ENCODE measurements at regions of chr5 and their contacts with region 1.

Region 1: GRCh38 chr5:38382898-38383297 is 124.5 kb downstream of the EGFLAM start:
- DNase-seq: peak; percentile 67
- H3K4me3 ChIP-seq: no peak overlapping the region; a peak in 1 of 4 replicates
- H3K27ac ChIP-seq: no peak overlapping the region
- H3K4me1 ChIP-seq: peaks cover 0 to 4% of the 10 kb centered on the region in 2 experiments; a peak in 2 of 4 replicates
- H3K27me3 ChIP-seq: peaks cover 10% of the 10 kb centered on the region; the same call in 1 of the 2 replicates
- CTCF ChIP-seq: peak; percentile 81
- EP300 ChIP-seq: no peak
- RAD21 ChIP-seq: peak; percentile 74

Region 2: DNA sequence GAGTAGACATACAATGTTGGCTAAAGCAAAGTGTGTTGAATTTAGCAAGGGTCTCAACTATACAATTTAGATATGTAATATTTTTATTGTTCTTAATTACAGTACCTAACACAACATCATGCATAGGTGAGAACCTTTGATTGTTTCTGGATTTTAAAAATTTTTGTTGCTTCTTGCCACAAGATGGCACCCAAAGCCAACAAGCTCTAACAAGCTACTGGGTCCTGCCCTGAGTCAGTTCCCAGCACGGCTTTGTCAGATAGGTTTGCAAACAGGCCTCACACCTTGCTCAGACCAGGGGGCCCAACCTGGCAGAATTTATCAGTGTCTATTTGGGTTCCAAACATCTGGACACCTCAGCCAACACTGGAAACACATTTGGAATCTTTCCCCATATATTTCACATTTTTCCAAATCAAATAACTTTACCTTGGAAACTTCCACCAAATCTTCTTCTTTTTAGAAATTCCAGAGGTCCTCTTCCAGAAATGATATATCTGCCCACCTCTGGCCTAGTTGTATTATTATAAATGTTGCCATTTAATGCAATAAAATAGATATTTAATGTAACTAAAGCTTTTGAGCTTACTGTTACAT is 174.0 kb before region 1 on chr5:
- CTCF ChIA-PET with region 1: interaction called, 27 read pairs
- POLR2A ChIA-PET with region 1: no interaction called
- DNase-seq: peak; percentile 51
- H3K4me3 ChIP-seq: no peak overlapping the region
- H3K27ac ChIP-seq: no peak overlapping the region
- H3K4me1 ChIP-seq: peaks cover 0 to 6% of the 10 kb centered on the region in 2 experiments; a peak in 2 of 4 replicates
- H3K27me3 ChIP-seq: no peaks in the 10 kb centered on the region
- CTCF ChIP-seq: peak; percentile 58
- EP300 ChIP-seq: no peak
- RAD21 ChIP-seq: peak; percentile 84

Region 3: GRCh38 chr5:38258319-38259061 is 124.4 kb before region 1 on chr5 and contains the start of gene EGFLAM:
- CTCF ChIA-PET with region 1: interaction called, 10 read pairs
- POLR2A ChIA-PET with region 1: no interaction called
- DNase-seq: peak; percentile 83
- H3K4me3 ChIP-seq: peak within 1 kb of the TSS; percentile 55 to 61
- H3K27ac ChIP-seq: no peak within 1 kb of the TSS
- H3K4me1 ChIP-seq: peaks cover 0 to 7% of the 10 kb centered on the region in 2 experiments; a peak in 1 of 4 replicates
- H3K27me3 ChIP-seq: peaks cover 48% of the 10 kb centered on the region
- CTCF ChIP-seq: peak; percentile 33; the same call in 1 of the 2 replicates
- EP300 ChIP-seq: no peak
- RAD21 ChIP-seq: no peak
- polyA plus RNA-seq, gene EGFLAM: 0.05 and 0.13 TPM in 2 replicates

Region 4: GRCh38 chr5:38347896-38348295 is 35.0 kb before region 1 on chr5:
- CTCF ChIA-PET with region 1: no interaction called
- POLR2A ChIA-PET with region 1: no interaction called
- DNase-seq: no peak
- H3K4me3 ChIP-seq: no peak overlapping the region
- H3K27ac ChIP-seq: no peak overlapping the region
- H3K4me1 ChIP-seq: no peaks in the 10 kb centered on the region
- H3K27me3 ChIP-seq: no peaks in the 10 kb centered on the region
- CTCF ChIP-seq: no peak
- EP300 ChIP-seq: no peak
- RAD21 ChIP-seq: no peak

Region 5: GRCh38 chr5:38370358-38371100 is 12.4 kb before region 1 on chr5:
- CTCF ChIA-PET with region 1: interaction called, 14 read pairs
- POLR2A ChIA-PET with region 1: no interaction called
- DNase-seq: no peak
- H3K4me3 ChIP-seq: no peak overlapping the region
- H3K27ac ChIP-seq: no peak overlapping the region
- H3K4me1 ChIP-seq: peaks cover 0 to 5% of the 10 kb centered on the region in 2 experiments; a peak in 1 of 4 replicates
- H3K27me3 ChIP-seq: peaks cover 8% of the 10 kb centered on the region; the same call in 1 of the 2 replicates
- CTCF ChIP-seq: no peak
- EP300 ChIP-seq: no peak
- RAD21 ChIP-seq: no peak

Region 6: GRCh38 chr5:38396766-38397165 is 13.9 kb after region 1 on chr5:
- CTCF ChIA-PET with region 1: interaction called, 24 read pairs
- POLR2A ChIA-PET with region 1: no interaction called
- DNase-seq: no peak
- H3K4me3 ChIP-seq: no peak overlapping the region
- H3K27ac ChIP-seq: no peak overlapping the region
- H3K4me1 ChIP-seq: no peaks in the 10 kb centered on the region; a peak in 1 of 4 replicates
- H3K27me3 ChIP-seq: no peaks in the 10 kb centered on the region; the same call in 1 of the 2 replicates
- CTCF ChIP-seq: no peak
- EP300 ChIP-seq: no peak
- RAD21 ChIP-seq: no peak

Region 7: DNA sequence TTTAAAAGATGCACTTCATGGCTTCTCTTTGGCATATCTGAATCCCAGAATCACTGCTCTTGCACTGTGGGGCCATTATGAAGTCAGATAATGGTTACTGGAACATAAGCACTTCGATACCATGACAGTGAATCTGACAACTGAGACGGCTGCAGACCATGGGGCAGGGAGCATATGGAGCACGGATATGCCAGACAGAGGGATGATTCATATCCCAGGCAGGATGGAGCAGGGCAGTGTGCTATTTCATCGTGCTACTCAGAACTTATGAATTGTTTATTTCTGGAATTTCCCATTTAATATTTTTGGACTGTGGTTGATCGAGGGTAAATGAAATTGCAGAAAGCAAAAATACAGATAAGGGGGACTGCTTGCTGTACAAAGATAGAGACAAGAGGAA is 20.5 kb after region 1 on chr5:
- CTCF ChIA-PET with region 1: interaction called, 18 read pairs
- POLR2A ChIA-PET with region 1: no interaction called
- DNase-seq: no peak
- H3K4me3 ChIP-seq: no peak overlapping the region
- H3K27ac ChIP-seq: no peak overlapping the region
- H3K4me1 ChIP-seq: peaks cover 0 to 4% of the 10 kb centered on the region in 2 experiments; a peak in 1 of 4 replicates
- H3K27me3 ChIP-seq: no peaks in the 10 kb centered on the region; the same call in 1 of the 2 replicates
- CTCF ChIP-seq: no peak
- EP300 ChIP-seq: no peak
- RAD21 ChIP-seq: no peak

Region 8: DNA sequence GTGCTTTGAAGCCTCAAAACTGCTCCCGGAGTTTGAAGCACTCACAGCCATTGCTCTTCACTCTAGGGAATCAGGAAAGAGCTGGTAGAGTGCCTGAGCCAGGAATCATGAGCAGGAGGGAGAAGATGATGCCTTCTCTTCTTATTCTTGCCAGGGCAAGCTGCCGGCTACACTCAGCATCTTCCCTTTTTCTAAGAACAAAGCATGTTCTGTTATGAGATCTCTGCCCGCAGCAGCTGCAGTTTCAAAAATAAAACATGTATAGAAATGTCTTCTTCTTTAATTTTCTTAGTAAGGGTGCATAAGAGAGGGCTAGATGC is 749.2 kb after region 1 on chr5:
- CTCF ChIA-PET with region 1: no interaction called
- POLR2A ChIA-PET with region 1: no interaction called
- DNase-seq: no peak
- H3K4me3 ChIP-seq: no peak overlapping the region
- H3K27ac ChIP-seq: no peak overlapping the region
- H3K4me1 ChIP-seq: no peaks in the 10 kb centered on the region
- H3K27me3 ChIP-seq: peaks cover 36% of the 10 kb centered on the region; the same call in 1 of the 2 replicates
- CTCF ChIP-seq: no peak
- EP300 ChIP-seq: no peak
- RAD21 ChIP-seq: no peak

Measured in SK-N-SH (cell line).